ENCODE measurements at regions of chr12 and their contacts with region 1.

Region 1: GRCh38 chr12:127381048-127381668 is 885.8 kb upstream of the TMEM132C start:
- DNase-seq: peak in 1 of 2 experiments; percentile 50
- H3K4me3 ChIP-seq: peak overlapping the region; percentile 35; the same call in 1 of the 2 replicates
- H3K27ac ChIP-seq: no peak overlapping the region
- H3K4me1 ChIP-seq: no peaks in the 10 kb centered on the region
- H3K27me3 ChIP-seq: 0 out of 2 replicates have a peak, but pooled peaks cover 1% of the 10 kb centered on the region
- CTCF ChIP-seq: peak; percentile 88

Region 2: DNA sequence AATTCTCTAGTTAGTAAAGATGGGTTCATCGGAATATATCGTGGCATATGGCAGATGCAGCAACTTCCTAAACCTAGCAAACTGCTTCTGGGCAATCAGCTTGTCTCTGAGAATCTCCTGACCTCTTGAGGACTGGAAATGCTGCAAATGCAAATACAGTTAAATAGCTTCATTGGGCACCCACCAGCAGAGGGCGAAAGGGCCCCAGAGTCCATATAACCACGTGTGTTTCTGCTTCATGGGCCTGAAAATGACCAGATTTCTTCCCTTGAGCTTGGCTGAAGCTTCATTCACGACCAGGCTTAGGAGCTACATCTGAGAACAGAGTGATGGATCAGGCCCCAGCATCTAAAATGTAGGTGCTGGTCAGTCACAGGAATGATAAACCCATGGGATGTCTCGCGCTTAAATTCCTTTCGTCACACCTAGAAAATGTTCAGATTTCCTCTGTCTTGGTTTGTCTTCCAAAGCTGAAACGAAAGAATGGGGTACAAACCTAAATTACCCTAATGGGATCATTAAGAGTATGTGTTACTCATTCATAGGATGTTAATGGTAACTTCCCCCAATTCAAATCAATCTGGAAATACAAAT is 596.7 kb before region 1 on chr12:
- CTCF ChIA-PET with region 1: no interaction called
- POLR2A ChIA-PET with region 1: no interaction called
- intact Hi-C with region 1: loop called (anchors 5 kb)
- DNase-seq: peak in 1 of 2 experiments; percentile 35
- H3K4me3 ChIP-seq: no peak overlapping the region
- H3K27ac ChIP-seq: no peak overlapping the region
- H3K4me1 ChIP-seq: no peaks in the 10 kb centered on the region
- H3K27me3 ChIP-seq: no peaks in the 10 kb centered on the region
- CTCF ChIP-seq: peak; percentile 70

Region 3: DNA sequence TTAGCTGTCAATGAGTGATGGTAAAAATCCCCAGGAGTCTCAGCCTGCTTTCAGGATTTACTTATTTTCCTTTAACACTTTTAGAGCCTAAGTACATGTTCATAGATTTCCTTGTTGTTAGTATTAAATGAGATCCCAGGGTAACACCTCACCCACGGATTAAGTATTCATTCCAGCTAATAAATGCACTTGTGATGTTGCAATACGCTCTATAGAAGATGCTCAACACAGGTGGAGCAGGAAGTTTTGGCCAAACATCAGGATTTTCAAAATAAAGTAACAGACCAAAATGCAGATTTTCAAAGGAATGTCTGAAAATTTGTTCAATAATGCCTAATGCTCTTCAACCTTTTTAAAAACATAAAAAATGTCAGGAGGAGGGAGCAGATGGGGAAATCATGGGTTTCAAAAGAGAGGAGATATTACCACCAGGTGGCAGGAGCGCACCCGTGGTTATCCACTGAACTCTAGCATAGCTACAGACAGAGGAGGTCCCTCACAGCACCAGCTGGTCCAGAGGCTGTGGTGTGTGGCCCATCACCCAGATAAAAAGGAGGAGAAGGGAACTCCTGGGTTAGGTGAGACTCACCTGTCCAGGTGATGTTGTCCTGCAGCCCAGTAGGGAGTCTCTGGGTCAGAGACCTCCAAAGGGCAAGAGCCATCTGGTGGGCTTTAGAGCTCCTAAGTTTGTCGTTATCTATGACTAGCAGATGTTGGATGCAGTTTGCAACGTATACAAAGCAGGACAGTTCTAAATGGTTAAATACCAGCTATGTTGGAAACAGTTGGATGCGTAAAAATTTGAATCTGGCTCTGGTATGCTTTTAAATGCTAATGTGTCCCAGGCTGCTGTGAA is 272.6 kb before region 1 on chr12:
- CTCF ChIA-PET with region 1: interaction called, 3 read pairs
- POLR2A ChIA-PET with region 1: no interaction called
- intact Hi-C with region 1: loop called (anchors 2 kb)
- DNase-seq: peak; percentile 44 to 50
- H3K4me3 ChIP-seq: no peak overlapping the region
- H3K27ac ChIP-seq: no peak overlapping the region
- H3K4me1 ChIP-seq: peaks cover 12% of the 10 kb centered on the region
- H3K27me3 ChIP-seq: no peaks in the 10 kb centered on the region
- CTCF ChIP-seq: peak; percentile 74